ENCODE measurements at regions of chr19 and their contacts with region 1.

Region 1: GRCh38 chr19:40221858-40222837 is 4.0 kb upstream of the TTC9B start:
- DNase-seq: peak in 2 of 3 donors; percentile 45 to 77
- ATAC-seq: peak; percentile 65 to 80 (median 68)
- H3K4me3 ChIP-seq: no peak overlapping the region
- H3K27ac ChIP-seq: no peak overlapping the region
- H3K4me1 ChIP-seq: peaks cover 0 to 16% (median 3%) of the 10 kb centered on the region in 4 donors
- H3K27me3 ChIP-seq: no peaks in the 10 kb centered on the region
- CTCF ChIP-seq: peak; percentile 79 to 87 (median 85)
- POLR2A ChIP-seq: no peak

Region 2: GRCh38 chr19:39996811-39997594 is 225.1 kb before region 1 on chr19 and contains the start of gene ZNF546:
- intact Hi-C with region 1: no loop called
- DNase-seq: peak; percentile 93 to 94 (median 94)
- ATAC-seq: peak; percentile 98
- H3K4me3 ChIP-seq: peak within 1 kb of the TSS; percentile 59 to 83 (median 71)
- H3K27ac ChIP-seq: peak within 1 kb of the TSS; percentile 57 to 82 (median 80)
- H3K4me1 ChIP-seq: peaks cover 0 to 14% (median 2%) of the 10 kb centered on the region in 4 donors
- H3K27me3 ChIP-seq: no peaks in the 10 kb centered on the region
- CTCF ChIP-seq: no peak
- POLR2A ChIP-seq: peak; percentile 92
- total RNA-seq, gene ZNF546: 1.5 to 5.4 (median 3.5) TPM

Region 3: GRCh38 chr19:40139533-40140287 is 82.4 kb before region 1 on chr19:
- intact Hi-C with region 1: loop called (anchors 5 to 10 kb)
- DNase-seq: no peak
- ATAC-seq: peak; percentile 72 to 89 (median 81)
- H3K4me3 ChIP-seq: no peak overlapping the region
- H3K27ac ChIP-seq: no peak overlapping the region
- H3K4me1 ChIP-seq: no peaks in the 10 kb centered on the region
- H3K27me3 ChIP-seq: no peaks in the 10 kb centered on the region
- CTCF ChIP-seq: peak; percentile 61 to 86 (median 68)
- POLR2A ChIP-seq: no peak

Region 4: GRCh38 chr19:40279120-40279551 is 57.0 kb after region 1 on chr19:
- intact Hi-C with region 1: loop called in 1 of 2 experiments (anchors 10 kb)
- DNase-seq: peak in 1 of 3 donors; percentile 56
- ATAC-seq: no peak
- H3K4me3 ChIP-seq: no peak overlapping the region
- H3K27ac ChIP-seq: peak overlapping the region in 2 of 3 donors; percentile 2 to 94
- H3K4me1 ChIP-seq: peaks cover 0 to 69% (median 31%) of the 10 kb centered on the region in 4 donors
- H3K27me3 ChIP-seq: no peaks in the 10 kb centered on the region
- CTCF ChIP-seq: no peak
- POLR2A ChIP-seq: no peak

Region 5: DNA sequence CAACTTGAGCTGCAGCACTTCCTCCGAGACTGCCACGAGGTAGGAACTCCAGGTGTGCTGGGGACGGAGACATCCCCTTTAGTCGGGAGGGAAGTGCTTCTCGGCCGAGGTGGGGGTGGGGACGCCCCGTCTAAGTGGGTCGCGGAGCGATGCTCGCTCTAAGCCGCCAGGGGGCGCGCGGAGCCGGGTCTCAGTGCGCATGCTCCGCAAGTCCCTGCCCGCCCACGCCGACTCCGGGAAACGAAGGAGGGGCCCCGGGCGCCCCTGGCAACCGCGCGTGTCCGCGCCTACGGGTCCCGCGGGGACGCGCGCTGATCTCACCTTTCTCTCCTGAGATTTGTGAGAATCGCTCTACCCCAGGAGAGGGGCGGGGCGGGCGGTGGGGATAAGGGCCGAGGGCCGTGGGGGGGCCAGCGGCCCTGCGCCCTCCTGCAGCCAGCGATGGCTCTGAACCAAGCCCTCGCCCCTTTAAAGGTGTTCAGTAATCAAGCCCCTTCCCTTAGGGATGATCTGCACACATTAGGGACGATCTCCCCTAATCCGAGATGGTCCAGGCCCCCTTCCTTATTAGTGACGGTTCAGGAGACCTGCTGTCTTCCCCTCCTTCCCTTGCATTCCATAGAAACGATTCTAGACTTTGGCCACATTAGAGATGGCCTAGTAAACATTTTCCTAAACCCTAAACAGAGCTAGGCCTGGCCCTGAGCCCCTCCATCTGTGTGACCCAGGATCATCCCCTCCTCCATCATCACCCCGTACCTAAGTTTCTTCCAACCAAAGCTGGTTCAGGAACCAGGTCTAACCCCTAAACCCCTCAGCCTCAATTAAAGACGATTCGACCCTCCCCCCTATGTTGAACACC is 307.2 kb after region 1 on chr19:
- intact Hi-C with region 1: loop called in 1 of 2 experiments (anchors 10 kb)
- DNase-seq: peak; percentile 88 to 91 (median 88)
- ATAC-seq: peak; percentile 85 to 97 (median 93)
- H3K4me3 ChIP-seq: peak overlapping the region; percentile 49 to 54 (median 53)
- H3K27ac ChIP-seq: no peak overlapping the region
- H3K4me1 ChIP-seq: no peaks in the 10 kb centered on the region
- H3K27me3 ChIP-seq: no peaks in the 10 kb centered on the region
- CTCF ChIP-seq: peak; percentile 93 to 97 (median 96)
- POLR2A ChIP-seq: no peak

Measured in right lobe of liver (tissue), 6 donors.